HEK293 (cell line): ENCODE measurements at regions of chr2 and their contacts with region 1.

Region 1: DNA sequence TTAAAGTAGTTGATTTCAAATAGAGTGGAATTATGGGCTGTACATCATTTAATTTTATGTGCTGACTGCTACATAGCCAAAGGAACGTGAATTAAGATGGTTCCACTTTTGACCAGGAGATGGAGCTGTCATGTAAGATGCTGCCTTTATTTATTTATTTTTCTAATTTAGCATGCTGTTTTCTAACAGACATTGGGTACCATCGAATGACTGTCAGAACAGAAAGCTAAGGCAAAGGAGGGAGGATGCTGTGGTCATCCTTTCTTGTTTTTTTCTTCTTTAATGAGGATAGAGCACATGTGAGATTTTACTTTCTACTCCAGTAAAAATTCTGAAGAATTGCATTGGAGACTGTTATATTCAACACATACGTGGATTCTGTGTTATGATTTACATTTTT is at the start of gene SCN2A:
- H3K4me3 ChIP-seq: no peak within 1 kb of the TSS
- H3K27ac ChIP-seq: no peak within 1 kb of the TSS
- H3K4me1 ChIP-seq: no peaks in the 10 kb centered on the region
- CTCF ChIP-seq: peak; percentile 19; the same call in 1 of the 2 replicates

Region 2: GRCh38 chr2:165219481-165219880 is 19.7 kb before region 1 on chr2:
- CTCF ChIA-PET with region 1: interaction called, 15 read pairs
- POLR2A ChIA-PET with region 1: no interaction called
- H3K4me3 ChIP-seq: no peak overlapping the region
- H3K27ac ChIP-seq: no peak overlapping the region
- H3K4me1 ChIP-seq: no peaks in the 10 kb centered on the region
- CTCF ChIP-seq: no peak

Region 3: GRCh38 chr2:165273176-165273575 is 33.9 kb after region 1 on chr2:
- CTCF ChIA-PET with region 1: no interaction called
- POLR2A ChIA-PET with region 1: no interaction called
- H3K4me3 ChIP-seq: no peak overlapping the region
- H3K27ac ChIP-seq: no peak overlapping the region
- H3K4me1 ChIP-seq: no peaks in the 10 kb centered on the region
- CTCF ChIP-seq: no peak

Region 4: DNA sequence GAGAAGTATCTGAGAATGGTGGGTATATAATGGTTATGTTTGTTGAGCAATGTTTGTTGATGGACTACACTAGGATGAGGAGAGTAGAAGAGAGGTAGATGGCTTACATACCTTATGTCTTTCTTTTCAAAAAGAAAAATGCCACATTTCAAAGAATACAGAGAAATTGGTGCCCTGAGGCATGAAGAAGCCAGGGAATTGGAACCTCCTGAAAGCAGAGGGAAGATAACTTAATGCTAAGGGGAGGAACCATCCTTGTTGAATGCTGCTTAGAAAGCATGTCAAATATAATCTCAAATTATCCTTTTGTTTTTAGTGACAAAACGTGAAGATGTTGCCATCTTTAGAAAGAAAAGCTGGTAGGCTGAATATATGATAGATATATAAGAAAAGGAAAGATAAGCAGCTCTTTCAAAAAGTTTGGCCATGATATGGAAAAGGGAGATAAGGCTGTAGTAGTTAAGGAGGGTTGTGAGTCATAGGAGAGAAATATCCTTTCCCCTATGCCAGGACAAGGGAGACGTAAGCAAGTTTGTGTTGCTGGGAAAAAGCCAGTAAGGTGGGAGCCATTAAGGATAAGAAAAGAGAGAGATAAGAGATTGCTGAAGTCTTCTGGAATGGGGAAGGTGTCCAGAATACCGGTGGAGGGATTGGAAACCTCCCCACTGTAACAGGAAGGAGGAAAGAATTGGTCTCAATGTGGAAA is 66.3 kb after region 1 on chr2:
- CTCF ChIA-PET with region 1: interaction called, 17 read pairs
- POLR2A ChIA-PET with region 1: no interaction called
- H3K4me3 ChIP-seq: no peak overlapping the region
- H3K27ac ChIP-seq: no peak overlapping the region
- H3K4me1 ChIP-seq: no peaks in the 10 kb centered on the region
- CTCF ChIP-seq: no peak

Region 5: GRCh38 chr2:165369131-165369935 is 130.1 kb after region 1 on chr2:
- CTCF ChIA-PET with region 1: no interaction called
- POLR2A ChIA-PET with region 1: no interaction called
- H3K4me3 ChIP-seq: no peak overlapping the region
- H3K27ac ChIP-seq: no peak overlapping the region
- H3K4me1 ChIP-seq: peaks cover 6% of the 10 kb centered on the region
- CTCF ChIP-seq: no peak

Region 6: DNA sequence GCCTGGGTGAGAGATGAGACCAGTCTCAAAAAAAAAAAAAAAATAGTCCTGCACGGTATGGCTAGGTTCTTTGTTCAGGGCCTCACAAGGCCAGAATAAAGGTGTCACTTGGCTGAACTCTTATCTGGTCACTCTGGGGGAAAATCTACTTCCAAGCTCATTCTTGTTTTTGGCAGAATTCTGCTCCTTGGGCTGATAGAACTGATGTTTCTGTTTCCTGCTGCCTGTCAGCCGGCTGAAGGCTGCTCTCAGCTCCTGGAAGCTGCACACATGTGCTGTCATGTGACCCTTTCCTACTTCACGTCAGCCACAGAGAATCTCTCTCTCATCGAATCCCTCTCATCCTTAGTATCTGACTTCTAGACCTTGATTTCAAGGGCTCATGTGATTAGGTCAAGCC is 240.6 kb after region 1 on chr2:
- CTCF ChIA-PET with region 1: no interaction called
- POLR2A ChIA-PET with region 1: no interaction called
- H3K4me3 ChIP-seq: no peak overlapping the region
- H3K27ac ChIP-seq: no peak overlapping the region
- H3K4me1 ChIP-seq: no peaks in the 10 kb centered on the region
- CTCF ChIP-seq: no peak